ENCODE measurements at regions of chr1 and their contacts with region 1.

Region 1: GRCh38 chr1:66436378-66437145 is 97.4 kb upstream of the SGIP1 start:
- DNase-seq: peak; percentile 98
- H3K4me3 ChIP-seq: no peak overlapping the region
- H3K27ac ChIP-seq: no peak overlapping the region
- H3K4me1 ChIP-seq: peaks cover 12% of the 10 kb centered on the region
- H3K27me3 ChIP-seq: no peaks in the 10 kb centered on the region
- CTCF ChIP-seq: peak; percentile 62 to 79

Region 2: GRCh38 chr1:66253330-66253921 is 183.1 kb before region 1 on chr1:
- CTCF ChIA-PET with region 1: no interaction called
- dilution Hi-C with region 1: loop called (anchors 5 kb)
- in situ Hi-C with region 1: loop called (anchors 5 kb)
- intact Hi-C with region 1: no loop called
- DNase-seq: peak; percentile 76
- H3K4me3 ChIP-seq: no peak overlapping the region
- H3K27ac ChIP-seq: no peak overlapping the region
- H3K4me1 ChIP-seq: no peaks in the 10 kb centered on the region
- H3K27me3 ChIP-seq: no peaks in the 10 kb centered on the region
- CTCF ChIP-seq: peak; percentile 84 to 91

Region 3: DNA sequence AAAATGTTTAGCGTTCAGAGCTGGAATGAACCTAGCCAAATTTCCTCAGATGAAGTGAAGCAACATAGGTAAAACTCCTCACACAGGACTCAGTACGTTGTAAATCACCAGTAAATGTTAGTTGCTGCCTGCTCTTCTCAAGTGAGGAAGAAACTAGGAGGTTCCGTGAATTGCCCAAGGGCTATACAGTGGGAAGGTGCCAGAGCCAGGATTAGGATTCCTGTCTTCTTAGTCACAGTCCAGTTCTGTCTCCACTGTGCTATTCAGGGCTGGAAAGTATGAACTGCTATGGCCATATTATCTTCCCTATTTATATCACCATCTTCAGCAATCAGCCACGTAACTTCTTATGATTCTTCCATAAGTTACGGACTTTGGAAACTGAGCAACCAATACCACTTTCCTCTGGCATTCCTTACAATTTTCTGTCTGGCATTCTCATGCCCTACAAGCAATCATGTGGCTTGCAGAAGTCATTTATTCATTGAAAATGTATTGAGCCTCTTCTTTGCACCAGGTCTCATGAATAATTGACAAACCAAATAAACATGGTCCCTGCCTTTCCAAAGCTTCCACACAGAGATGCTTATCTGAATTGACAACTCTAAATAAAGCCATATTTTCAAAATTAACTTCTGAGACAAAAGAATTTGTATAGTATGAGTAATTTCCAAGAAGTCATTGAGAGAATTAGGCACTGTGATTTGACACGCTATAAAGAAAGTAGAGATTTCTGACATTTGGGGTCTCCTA is 174.2 kb before region 1 on chr1:
- CTCF ChIA-PET with region 1: no interaction called
- dilution Hi-C with region 1: no loop called
- in situ Hi-C with region 1: loop called in 1 of 2 experiments (anchors 5 kb)
- intact Hi-C with region 1: no loop called
- DNase-seq: peak; percentile 94
- H3K4me3 ChIP-seq: no peak overlapping the region
- H3K27ac ChIP-seq: no peak overlapping the region
- H3K4me1 ChIP-seq: peaks cover 33% of the 10 kb centered on the region
- H3K27me3 ChIP-seq: peaks cover 2% of the 10 kb centered on the region
- CTCF ChIP-seq: no peak

Region 4: DNA sequence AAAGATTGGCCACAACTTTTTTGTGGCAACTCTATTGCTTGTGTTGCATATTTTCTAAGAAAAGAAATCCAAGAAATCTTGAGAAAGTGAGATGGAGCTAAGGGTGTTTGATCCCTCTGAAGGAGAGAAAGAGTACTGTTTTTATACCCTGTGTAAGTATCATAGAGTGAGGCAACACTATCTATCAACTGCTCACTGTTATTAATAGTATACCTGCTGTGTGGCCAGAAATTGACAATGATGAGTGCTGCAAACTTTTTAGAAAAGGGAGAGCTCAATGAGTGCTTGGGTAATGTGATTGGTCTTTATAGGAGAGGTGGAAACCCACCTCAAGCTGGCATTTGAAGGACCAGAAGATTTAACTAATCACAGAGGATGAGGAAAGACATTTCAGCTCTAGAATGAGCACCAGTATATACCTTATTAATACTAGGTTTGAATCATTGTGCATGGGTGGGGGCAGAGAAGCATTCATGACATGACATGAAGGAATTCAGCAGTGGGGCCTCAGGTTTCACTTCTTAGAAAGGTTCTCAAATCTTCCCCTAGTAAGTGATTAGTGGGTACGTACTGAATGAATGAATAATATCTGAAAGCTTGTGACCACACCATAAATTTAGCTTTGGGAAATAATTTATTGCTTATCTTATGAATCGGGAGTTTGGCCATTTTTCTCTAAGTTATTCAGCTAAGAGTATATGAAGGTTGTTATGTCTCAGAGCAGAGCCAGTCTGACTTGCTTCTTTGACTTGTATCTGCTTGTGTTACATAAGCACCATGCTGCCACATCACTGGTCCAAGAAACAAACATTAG is 71.8 kb before region 1 on chr1:
- CTCF ChIA-PET with region 1: no interaction called
- dilution Hi-C with region 1: loop called (anchors 5 kb)
- in situ Hi-C with region 1: no loop called
- intact Hi-C with region 1: no loop called
- DNase-seq: peak; percentile 64
- H3K4me3 ChIP-seq: no peak overlapping the region
- H3K27ac ChIP-seq: no peak overlapping the region
- H3K4me1 ChIP-seq: no peaks in the 10 kb centered on the region
- H3K27me3 ChIP-seq: peaks cover 3% of the 10 kb centered on the region
- CTCF ChIP-seq: no peak

Measured in mammary epithelial cell (primary cell).